Brain microvascular endothelial cell (primary cell): ENCODE measurements at regions of chr11 and their contacts with region 1.

Region 1: DNA sequence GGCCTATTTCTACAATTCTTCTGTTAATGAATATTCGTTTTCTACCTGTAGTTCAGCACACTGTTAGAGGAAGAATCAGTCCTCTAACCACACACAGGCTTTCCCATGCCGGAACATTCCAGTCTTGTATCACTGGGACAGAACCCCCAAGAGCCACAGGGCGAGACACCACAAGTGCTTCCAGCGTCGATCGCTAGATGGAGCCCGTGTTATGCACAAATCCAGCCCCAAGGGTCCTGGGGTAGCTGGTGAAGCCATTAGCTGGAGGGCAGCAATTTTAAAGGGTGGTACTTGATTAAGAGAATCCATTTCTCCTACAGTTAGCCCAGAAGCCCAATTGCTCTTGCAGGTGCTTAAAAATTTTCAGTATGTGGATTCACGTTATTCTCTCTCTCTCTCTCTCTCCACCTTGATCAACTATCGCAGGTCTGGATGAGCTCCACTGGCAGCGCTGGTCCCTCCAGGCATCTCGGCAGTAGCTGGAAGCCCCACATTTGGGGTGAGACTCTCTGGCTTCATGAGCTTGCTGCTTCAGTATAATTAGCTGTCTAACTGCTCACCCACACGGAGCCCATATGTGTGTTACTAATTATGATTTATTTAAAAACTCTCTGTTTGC is 148.2 kb upstream of the SNX19 start:
- DNase-seq: peak; percentile 52
- H3K4me3 ChIP-seq: no peak overlapping the region
- H3K27ac ChIP-seq: no peak overlapping the region
- H3K27me3 ChIP-seq: peaks cover 2% of the 10 kb centered on the region
- CTCF ChIP-seq: peak; percentile 97

Region 2: DNA sequence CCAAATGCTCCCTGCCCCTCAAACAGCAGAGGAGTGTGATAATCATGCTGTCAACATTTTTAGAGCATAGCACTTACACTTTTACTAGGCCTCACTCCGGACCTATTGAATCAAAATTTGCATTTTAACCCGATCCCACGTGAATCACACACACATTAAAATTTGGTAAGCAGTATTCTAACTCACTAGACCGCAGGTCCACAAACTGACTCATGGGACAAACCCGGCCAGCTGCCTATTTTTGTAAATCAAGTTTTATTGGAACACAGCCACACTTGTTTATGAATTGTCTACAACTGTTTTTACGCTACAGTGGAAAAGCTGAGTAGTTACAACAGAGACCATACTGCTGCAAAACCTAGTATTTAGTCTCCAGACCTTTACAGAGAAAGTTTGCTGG is 191.5 kb before region 1 on chr11:
- in situ Hi-C with region 1: no loop called
- DNase-seq: peak; percentile 66
- H3K4me3 ChIP-seq: no peak overlapping the region
- H3K27ac ChIP-seq: peak overlapping the region; percentile 52
- H3K27me3 ChIP-seq: no peaks in the 10 kb centered on the region
- CTCF ChIP-seq: no peak

Region 3: GRCh38 chr11:131674051-131674755 is 609.7 kb after region 1 on chr11:
- in situ Hi-C with region 1: loop called (anchors 25 kb)
- DNase-seq: peak; percentile 86
- H3K4me3 ChIP-seq: no peak overlapping the region
- H3K27ac ChIP-seq: no peak overlapping the region
- H3K27me3 ChIP-seq: no peaks in the 10 kb centered on the region
- CTCF ChIP-seq: peak; percentile 99